HEK293 (cell line): ENCODE measurements at regions of chr5 and their contacts with region 1.

Region 1: GRCh38 chr5:138594305-138595058 is 19.3 kb upstream of the HSPA9 start:
- H3K4me3 ChIP-seq: no peak overlapping the region
- H3K27ac ChIP-seq: no peak overlapping the region
- H3K4me1 ChIP-seq: no peaks in the 10 kb centered on the region
- CTCF ChIP-seq: no peak

Region 2: DNA sequence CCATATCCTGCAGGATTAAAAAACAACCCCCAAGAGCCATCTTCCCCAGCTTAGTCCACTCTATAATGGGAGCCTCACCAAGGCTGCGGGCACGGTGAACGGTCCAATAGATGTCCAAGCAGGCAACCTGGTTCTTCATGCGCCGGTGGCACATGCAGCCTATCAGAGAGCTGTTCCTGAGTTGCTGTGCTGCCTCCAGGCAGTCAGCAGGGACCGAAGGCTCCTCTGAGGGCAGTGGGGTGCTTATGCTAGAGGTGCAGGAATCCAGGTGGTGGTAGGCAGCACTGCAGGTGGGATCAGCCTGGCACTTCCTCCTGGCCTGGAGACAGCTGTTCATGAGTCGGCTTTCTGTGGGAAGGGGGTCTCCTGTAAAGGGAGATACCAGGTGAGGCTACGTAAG is 330.3 kb before region 1 on chr5:
- CTCF ChIA-PET with region 1: no interaction called
- POLR2A ChIA-PET with region 1: no interaction called
- H3K4me3 ChIP-seq: no peak overlapping the region
- H3K27ac ChIP-seq: no peak overlapping the region
- H3K4me1 ChIP-seq: no peaks in the 10 kb centered on the region
- CTCF ChIP-seq: no peak

Region 3: DNA sequence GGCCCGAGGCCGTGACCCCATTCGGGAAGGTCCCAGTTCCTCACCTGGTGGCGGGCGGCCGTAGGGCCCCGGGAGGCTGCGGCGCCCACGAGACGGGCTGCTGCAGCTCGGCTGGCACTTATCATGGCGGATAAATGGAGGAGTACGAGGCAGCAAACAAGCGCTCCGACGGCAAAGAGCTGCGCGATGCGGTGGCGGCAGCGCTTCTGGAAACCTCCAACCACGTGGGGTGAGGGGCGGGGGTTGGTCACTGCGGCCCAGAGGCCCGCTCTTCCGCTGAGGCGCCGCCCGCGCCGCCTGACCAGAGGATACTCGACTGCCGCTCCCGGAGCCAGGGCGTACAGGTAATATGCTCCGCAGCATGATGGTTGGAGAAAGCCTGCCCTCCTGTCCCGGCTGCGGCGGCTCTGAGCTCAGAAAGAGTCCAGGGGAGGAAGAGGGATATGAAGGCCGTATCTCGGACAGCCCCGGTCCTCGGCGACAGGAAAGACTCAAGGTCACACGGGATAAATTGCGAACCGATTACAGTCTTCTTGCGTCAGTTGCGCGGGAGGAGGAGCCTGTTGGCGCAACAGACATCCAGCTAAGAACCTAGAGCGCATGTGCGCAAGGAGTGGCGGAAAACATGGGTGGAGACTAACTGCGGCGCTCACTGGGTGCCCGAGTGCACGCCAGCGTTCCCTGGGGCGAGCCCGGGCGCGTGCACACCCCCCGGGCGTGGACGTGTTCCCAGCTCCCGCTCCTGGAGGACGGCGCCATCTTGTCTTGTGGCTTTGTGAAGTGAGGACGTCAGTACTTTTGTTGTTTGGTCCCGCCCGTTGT is 19.1 kb before region 1 on chr5 and contains the start of gene HSPA9:
- CTCF ChIA-PET with region 1: interaction called, 22 read pairs
- POLR2A ChIA-PET with region 1: interaction called, 3 read pairs
- H3K4me3 ChIP-seq: peak within 1 kb of the TSS; percentile 75
- H3K27ac ChIP-seq: peak within 1 kb of the TSS; percentile 99
- H3K4me1 ChIP-seq: no peaks in the 10 kb centered on the region
- CTCF ChIP-seq: peak; percentile 54; the same call in 1 of the 2 replicates

Region 4: GRCh38 chr5:138583984-138584637 is 10.4 kb before region 1 on chr5:
- CTCF ChIA-PET with region 1: interaction called, 22 read pairs
- POLR2A ChIA-PET with region 1: no interaction called
- H3K4me3 ChIP-seq: no peak overlapping the region
- H3K27ac ChIP-seq: no peak overlapping the region
- H3K4me1 ChIP-seq: 0 out of 2 replicates have a peak, but pooled peaks cover 5% of the 10 kb centered on the region
- CTCF ChIP-seq: no peak

Region 5: GRCh38 chr5:138605254-138605972 is 10.9 kb after region 1 on chr5:
- CTCF ChIA-PET with region 1: interaction called, 17 read pairs
- POLR2A ChIA-PET with region 1: no interaction called
- H3K4me3 ChIP-seq: no peak overlapping the region
- H3K27ac ChIP-seq: no peak overlapping the region
- H3K4me1 ChIP-seq: no peaks in the 10 kb centered on the region; the same call in 1 of the 2 replicates
- CTCF ChIP-seq: no peak